Ascending aorta (tissue), 2 donors: ENCODE measurements at regions of chr17 and their contacts with region 1.

Region 1: GRCh38 chr17:57915985-57916757 is 39.0 kb downstream of the CUEDC1 start:
- DNase-seq: no peak
- H3K4me3 ChIP-seq: no peak overlapping the region
- H3K27ac ChIP-seq: peak overlapping the region; percentile 20 to 44
- H3K4me1 ChIP-seq: peaks cover 0 to 51% of the 10 kb centered on the region in 2 donors
- H3K27me3 ChIP-seq: no peaks in the 10 kb centered on the region
- CTCF ChIP-seq: no peak

Region 2: DNA sequence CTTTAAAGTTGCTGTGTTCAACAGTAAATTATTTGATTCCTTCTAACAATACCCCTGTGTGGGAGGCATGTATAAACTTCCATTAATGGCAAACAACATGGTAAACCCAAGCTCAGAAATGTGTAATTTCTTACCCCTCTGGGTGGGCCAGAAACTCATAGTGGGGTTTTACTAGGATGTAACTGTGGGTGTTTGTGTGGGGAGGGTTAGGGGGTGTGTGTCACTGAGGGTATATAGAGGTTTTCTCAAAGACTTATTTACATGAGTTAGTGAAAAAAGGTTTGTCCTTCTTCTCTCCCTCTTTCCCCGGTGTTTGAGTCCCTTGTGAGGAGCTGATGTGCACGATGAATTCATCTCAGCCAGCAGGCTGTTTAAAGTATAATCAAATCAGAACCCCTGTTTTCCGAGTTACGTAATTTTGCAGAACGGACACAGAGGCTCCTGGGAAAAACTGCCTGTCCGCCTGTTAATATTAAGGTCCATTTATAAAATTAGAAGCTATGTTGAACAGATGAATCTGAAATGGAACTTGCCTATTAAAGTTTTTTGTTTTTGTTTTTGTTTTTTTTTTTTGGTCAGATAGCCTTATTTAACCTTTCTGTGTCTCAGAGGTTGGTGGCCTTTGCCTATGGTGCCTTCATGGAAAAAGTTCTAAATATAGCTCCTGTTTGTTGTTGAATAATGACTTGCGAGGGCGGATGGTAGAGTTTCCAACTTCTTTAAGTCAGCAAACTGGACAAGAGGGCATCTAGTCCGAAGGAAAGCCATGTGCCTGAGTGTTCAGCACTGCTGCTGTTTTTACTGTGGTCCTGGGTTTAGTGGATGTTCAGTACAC is 586.6 kb before region 1 on chr17:
- intact Hi-C with region 1: no loop called
- DNase-seq: no peak
- H3K4me3 ChIP-seq: no peak overlapping the region
- H3K27ac ChIP-seq: peak overlapping the region; percentile 57 to 61
- H3K4me1 ChIP-seq: peaks cover 0 to 6% of the 10 kb centered on the region in 2 donors
- H3K27me3 ChIP-seq: no peaks in the 10 kb centered on the region
- CTCF ChIP-seq: no peak

Region 3: DNA sequence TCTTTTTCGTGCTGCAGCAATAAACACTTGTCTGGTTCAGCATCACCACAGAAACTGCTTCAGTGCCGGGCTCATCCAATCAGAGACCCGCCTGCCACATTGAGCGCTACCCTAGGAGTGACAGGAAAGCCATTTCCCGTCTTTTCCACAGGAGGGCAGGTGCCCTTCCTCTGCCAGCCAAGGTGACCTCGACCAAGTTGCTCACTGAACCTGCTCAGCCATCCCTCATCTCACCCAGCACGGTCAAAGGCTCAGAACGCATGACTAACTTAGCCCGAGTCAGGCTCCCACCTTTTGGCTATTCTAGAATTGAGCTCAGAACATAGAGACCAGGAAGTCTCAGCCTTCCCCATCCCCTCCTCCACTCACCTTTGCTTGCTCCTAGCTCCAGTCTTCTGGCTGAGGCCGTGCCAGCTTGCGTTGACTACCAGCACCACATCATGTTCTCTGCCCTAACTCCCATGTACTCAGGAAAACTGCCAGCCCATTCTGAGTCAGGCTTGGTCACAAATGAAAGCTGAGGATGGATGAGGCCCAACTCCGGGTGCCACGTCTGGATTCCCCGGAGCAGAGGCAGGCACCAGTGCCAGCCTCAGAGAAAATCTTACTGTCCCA is 81.9 kb before region 1 on chr17:
- intact Hi-C with region 1: no loop called
- DNase-seq: peak; percentile 85 to 96
- H3K4me3 ChIP-seq: peak overlapping the region in 1 of 2 donors; percentile 60
- H3K27ac ChIP-seq: peak overlapping the region; percentile 83 to 88
- H3K4me1 ChIP-seq: peaks cover 10 to 19% of the 10 kb centered on the region in 2 donors
- H3K27me3 ChIP-seq: no peaks in the 10 kb centered on the region
- CTCF ChIP-seq: peak in 2 of 3 experiments; percentile 9 to 24

Region 4: GRCh38 chr17:57898487-57899311 is 17.5 kb before region 1 on chr17:
- intact Hi-C with region 1: loop called (anchors 2 kb)
- DNase-seq: no peak
- H3K4me3 ChIP-seq: no peak overlapping the region
- H3K27ac ChIP-seq: peak overlapping the region; percentile 71 to 79
- H3K4me1 ChIP-seq: peaks cover 21 to 57% of the 10 kb centered on the region in 2 donors
- H3K27me3 ChIP-seq: no peaks in the 10 kb centered on the region
- CTCF ChIP-seq: no peak

Region 5: DNA sequence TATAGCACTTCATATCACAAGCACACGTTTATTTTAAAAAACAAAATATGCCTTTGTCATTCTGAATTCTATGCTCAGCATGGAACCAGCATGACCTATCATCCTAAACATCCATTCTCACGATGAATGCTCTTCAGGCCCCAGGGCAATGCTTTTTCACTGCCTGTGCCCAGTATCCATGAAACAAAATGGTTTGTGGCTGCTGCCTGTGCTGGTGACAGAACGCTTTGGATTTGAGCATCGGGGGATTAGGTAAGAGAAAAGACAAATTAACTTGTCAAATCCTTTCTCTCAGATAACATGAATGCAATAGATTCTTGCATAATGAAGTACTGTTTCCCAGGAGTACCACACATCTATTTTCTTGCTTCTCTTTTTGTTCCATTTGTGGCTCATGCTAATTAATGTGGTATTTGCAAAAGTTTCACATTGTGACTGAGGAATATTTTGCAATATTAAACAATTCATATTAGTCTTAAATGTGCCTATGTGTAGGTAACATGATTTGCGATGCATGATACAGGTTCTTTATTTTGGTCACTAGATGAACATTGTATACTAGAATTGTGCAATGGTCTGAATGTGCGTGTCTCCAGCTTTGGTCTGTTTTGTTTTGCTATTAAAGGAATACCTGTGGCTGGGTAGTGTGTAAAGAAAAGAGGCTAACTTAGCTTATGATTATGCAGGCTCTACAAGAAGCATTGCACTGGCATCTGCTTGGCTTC is 116.7 kb after region 1 on chr17:
- intact Hi-C with region 1: no loop called
- DNase-seq: no peak
- H3K4me3 ChIP-seq: no peak overlapping the region
- H3K27ac ChIP-seq: no peak overlapping the region
- H3K4me1 ChIP-seq: no peaks in the 10 kb centered on the region
- H3K27me3 ChIP-seq: no peaks in the 10 kb centered on the region
- CTCF ChIP-seq: no peak

Region 6: GRCh38 chr17:58344047-58344790 is 428.0 kb after region 1 on chr17:
- intact Hi-C with region 1: no loop called
- DNase-seq: no peak
- H3K4me3 ChIP-seq: no peak overlapping the region
- H3K27ac ChIP-seq: no peak overlapping the region
- H3K4me1 ChIP-seq: no peaks in the 10 kb centered on the region
- H3K27me3 ChIP-seq: no peaks in the 10 kb centered on the region
- CTCF ChIP-seq: no peak